T-cell (primary cell): ENCODE measurements at regions of chr1 and their contacts with region 1.

Region 1: DNA sequence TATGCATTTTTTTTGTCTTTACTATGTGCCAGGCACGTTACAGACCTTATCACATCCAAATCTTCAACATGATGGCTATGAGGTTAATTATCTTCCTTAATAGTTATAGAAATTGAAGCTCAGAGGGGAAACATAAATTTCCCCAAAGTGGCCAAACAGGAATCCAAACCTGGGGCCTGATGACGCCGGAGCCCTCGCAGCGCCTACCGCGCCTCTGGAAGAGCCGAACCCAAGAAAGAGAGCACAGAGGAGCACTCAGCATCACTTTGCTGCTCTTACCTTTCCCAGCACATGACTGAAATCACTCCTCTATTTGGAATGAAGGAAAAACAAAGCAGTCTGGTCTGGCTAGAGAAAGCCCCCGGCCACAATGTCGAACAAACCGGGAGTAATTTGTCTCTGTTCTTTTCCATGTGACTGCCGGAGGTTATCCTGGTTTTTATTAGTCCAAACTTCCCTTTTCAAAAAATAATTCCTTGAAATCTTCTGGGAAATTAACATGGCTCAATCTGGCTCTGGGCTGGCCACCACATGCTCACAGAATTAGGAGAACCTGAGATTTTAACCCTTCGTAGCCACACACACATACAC is 195.5 kb downstream of the ADSS2 start:
- DNase-seq: no peak
- ATAC-seq: no peak
- H3K4me3 ChIP-seq: no peak overlapping the region
- H3K4me3 Mint-ChIP-seq: no peak overlapping the region
- H3K27ac ChIP-seq: no peak overlapping the region
- H3K27ac Mint-ChIP-seq: no peak overlapping the region
- H3K4me1 ChIP-seq: peaks cover 0 to 2% of the 10 kb centered on the region in 2 experiments
- H3K4me1 Mint-ChIP-seq: peaks cover 0 to 3% (median 0%) of the 10 kb centered on the region in 3 donors
- H3K27me3 ChIP-seq: peaks cover 0 to 5% of the 10 kb centered on the region in 2 experiments
- H3K27me3 Mint-ChIP-seq: peaks cover 0 to 2% of the 10 kb centered on the region in 2 donors

Region 2: GRCh38 chr1:243312952-243313634 is 943.1 kb before region 1 on chr1:
- CTCF ChIA-PET with region 1: no interaction called
- POLR2A ChIA-PET with region 1: interaction called in 1 of 2 experiments, 10 read pairs
- DNase-seq: no peak
- ATAC-seq: no peak
- H3K4me3 ChIP-seq: no peak overlapping the region
- H3K4me3 Mint-ChIP-seq: no peak overlapping the region
- H3K27ac ChIP-seq: no peak overlapping the region
- H3K27ac Mint-ChIP-seq: no peak overlapping the region
- H3K4me1 ChIP-seq: no peaks in the 10 kb centered on the region
- H3K4me1 Mint-ChIP-seq: peaks cover 0 to 3% (median 0%) of the 10 kb centered on the region in 3 donors
- H3K27me3 ChIP-seq: no peaks in the 10 kb centered on the region
- H3K27me3 Mint-ChIP-seq: no peaks in the 10 kb centered on the region